Endothelial cell of umbilical vein (primary cell): ENCODE measurements at regions of chr7 and their contacts with region 1.

Region 1: DNA sequence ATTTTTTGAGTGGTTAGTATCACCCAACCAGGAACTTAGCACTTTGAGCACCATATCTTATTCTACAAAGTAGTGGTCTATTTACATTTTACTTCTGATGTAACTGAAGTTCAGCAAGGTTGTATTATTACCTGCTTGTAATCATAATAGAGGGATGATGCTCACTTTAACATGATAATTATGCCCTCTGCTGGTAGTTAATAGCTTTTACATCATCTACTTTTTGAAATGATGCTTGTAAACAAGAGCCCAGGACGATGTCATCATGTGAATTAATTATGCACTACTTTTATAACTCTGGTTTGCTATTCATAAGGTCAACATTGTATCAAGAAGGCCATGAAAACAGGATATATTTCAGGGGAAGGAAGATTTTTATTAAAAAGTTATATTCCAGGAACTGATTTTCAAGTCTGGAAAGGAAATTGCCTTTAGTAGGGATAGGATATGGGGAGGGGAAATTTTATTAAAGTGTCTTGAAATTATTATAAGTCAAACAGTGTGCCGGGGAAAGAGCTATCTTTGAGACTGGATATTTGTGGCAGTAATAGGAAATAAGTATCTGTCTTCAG is 80.3 kb upstream of the SCIN start:
- DNase-seq: peak; percentile 48
- H3K4me3 ChIP-seq: no peak overlapping the region
- H3K27ac ChIP-seq: no peak overlapping the region
- H3K4me1 ChIP-seq: no peaks in the 10 kb centered on the region
- H3K27me3 ChIP-seq: no peaks in the 10 kb centered on the region
- CTCF ChIP-seq: peak; percentile 25 to 28
- POLR2A ChIP-seq: no peak

Region 2: GRCh38 chr7:11373546-11374142 is 1116.6 kb before region 1 on chr7:
- CTCF ChIA-PET with region 1: interaction called, 12 read pairs
- POLR2A ChIA-PET with region 1: no interaction called
- dilution Hi-C with region 1: no loop called
- intact Hi-C with region 1: no loop called
- DNase-seq: peak; percentile 38
- H3K4me3 ChIP-seq: no peak overlapping the region
- H3K27ac ChIP-seq: no peak overlapping the region
- H3K4me1 ChIP-seq: no peaks in the 10 kb centered on the region
- H3K27me3 ChIP-seq: no peaks in the 10 kb centered on the region
- CTCF ChIP-seq: peak; percentile 16 to 29
- POLR2A ChIP-seq: no peak

Region 3: GRCh38 chr7:12067141-12067831 is 422.9 kb before region 1 on chr7:
- CTCF ChIA-PET with region 1: interaction called, 5 read pairs
- POLR2A ChIA-PET with region 1: no interaction called
- dilution Hi-C with region 1: no loop called
- intact Hi-C with region 1: loop called (anchors 1 kb)
- DNase-seq: peak; percentile 60
- H3K4me3 ChIP-seq: no peak overlapping the region
- H3K27ac ChIP-seq: no peak overlapping the region
- H3K4me1 ChIP-seq: no peaks in the 10 kb centered on the region
- H3K27me3 ChIP-seq: no peaks in the 10 kb centered on the region
- CTCF ChIP-seq: peak; percentile 57 to 62
- POLR2A ChIP-seq: no peak

Region 4: DNA sequence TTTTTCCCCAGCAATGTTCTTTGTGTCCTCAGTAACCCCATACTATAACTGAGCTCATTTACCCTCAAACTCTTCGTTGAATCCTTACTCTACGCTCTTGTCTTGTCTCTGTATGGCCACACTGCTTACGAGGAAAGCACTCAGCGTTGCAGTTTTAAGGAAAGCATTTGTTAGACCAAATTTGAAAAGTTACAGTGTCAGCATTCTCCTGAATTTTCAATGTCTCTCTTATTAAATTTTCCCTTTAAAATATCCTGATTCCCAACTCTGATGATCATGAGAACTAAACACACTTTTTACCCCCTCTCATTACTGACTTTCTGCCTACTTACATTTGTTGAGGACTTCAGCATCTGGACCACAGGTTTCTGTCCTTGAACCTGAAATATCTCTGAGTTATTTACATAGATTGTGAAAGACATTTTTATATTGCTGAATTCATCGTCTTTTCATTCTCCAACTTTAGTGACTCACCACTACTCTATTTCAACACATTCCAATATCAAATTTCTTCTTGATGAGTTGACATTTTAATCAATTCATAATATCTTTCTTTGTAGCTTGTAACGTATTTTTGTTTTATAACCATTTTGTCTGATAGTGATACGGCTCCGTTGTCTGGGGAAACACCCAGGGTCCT is 66.7 kb before region 1 on chr7:
- CTCF ChIA-PET with region 1: interaction called, 13 read pairs
- POLR2A ChIA-PET with region 1: no interaction called
- dilution Hi-C with region 1: no loop called
- intact Hi-C with region 1: no loop called
- DNase-seq: peak; percentile 47
- H3K4me3 ChIP-seq: no peak overlapping the region
- H3K27ac ChIP-seq: peak overlapping the region; percentile 75
- H3K4me1 ChIP-seq: peaks cover 15% of the 10 kb centered on the region
- H3K27me3 ChIP-seq: no peaks in the 10 kb centered on the region
- CTCF ChIP-seq: no peak
- POLR2A ChIP-seq: no peak

Region 5: DNA sequence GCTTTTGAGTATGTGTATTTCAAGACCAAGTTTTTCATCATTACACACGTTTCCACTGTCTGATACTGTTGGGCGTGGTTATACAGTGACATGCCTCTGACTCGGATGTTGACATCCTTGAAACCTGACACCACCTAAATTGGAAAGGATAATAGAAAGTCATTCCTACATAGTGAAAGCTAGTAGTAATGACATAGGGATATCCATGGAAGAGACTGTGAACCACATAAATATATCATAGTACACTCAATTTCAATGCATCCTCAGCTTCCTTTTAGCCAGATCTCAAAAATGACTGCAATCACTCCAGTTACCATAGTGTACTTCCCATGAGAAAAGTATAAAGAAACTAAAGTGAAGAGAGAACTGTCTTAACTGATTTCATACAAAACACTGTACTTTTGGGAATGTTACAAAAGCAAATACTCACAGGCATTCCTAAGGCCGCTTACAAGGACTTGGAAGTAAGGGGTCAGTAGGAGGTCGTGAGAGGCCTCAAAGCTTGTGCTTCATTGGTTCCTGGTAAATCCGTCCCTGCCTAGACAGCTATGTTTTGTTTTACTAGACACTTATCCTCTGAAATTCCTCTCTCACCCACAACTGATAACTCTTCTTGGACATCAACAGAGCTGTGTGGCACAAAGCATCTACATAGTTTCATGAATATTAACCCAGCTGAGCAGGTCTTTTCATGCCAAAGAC is 14.7 kb before region 1 on chr7:
- CTCF ChIA-PET with region 1: interaction called, 30 read pairs
- POLR2A ChIA-PET with region 1: no interaction called
- dilution Hi-C with region 1: no loop called
- intact Hi-C with region 1: no loop called
- DNase-seq: peak; percentile 25
- H3K4me3 ChIP-seq: no peak overlapping the region
- H3K27ac ChIP-seq: no peak overlapping the region
- H3K4me1 ChIP-seq: no peaks in the 10 kb centered on the region
- H3K27me3 ChIP-seq: no peaks in the 10 kb centered on the region
- CTCF ChIP-seq: no peak
- POLR2A ChIP-seq: no peak